WTC11 (cell line): ENCODE measurements at regions of chr4 and their contacts with region 1.

Region 1: GRCh38 chr4:21512353-21512752 is 436.2 kb downstream of the KCNIP4 start:
- DNase-seq: no peak
- ATAC-seq: peak; percentile 79
- H3K4me3 Mint-ChIP-seq: no peak overlapping the region
- H3K27ac Mint-ChIP-seq: no peak overlapping the region
- H3K4me1 Mint-ChIP-seq: no peaks in the 10 kb centered on the region
- H3K27me3 Mint-ChIP-seq: no peaks in the 10 kb centered on the region
- CTCF ChIP-seq: peak; percentile 37

Region 2: DNA sequence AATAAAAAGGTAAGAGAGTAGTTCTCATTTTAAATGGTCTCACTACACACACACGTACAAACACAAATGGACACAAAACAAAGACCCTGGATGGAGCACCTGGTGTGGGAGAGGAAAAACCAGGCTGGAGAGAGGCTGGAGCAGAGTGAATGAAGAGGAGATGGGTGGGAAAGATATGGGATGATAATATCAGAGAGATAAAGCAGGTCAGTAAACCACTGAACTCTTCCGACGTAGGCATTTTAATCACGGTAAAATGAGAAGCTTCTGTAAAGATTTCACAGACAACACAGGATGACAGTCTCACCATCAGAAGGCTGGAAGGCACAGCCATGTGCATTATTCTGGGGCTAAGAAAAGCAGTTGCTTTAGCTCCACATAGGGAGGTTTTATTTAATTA is 96.6 kb before region 1 on chr4:
- CTCF ChIA-PET with region 1: no interaction called
- POLR2A ChIA-PET with region 1: no interaction called
- DNase-seq: no peak
- ATAC-seq: no peak
- H3K4me3 Mint-ChIP-seq: no peak overlapping the region
- H3K27ac Mint-ChIP-seq: no peak overlapping the region
- H3K4me1 Mint-ChIP-seq: no peaks in the 10 kb centered on the region
- H3K27me3 Mint-ChIP-seq: no peaks in the 10 kb centered on the region; the same call in 1 of the 2 replicates
- CTCF ChIP-seq: no peak

Region 3: GRCh38 chr4:21457086-21457840 is 55.1 kb before region 1 on chr4:
- CTCF ChIA-PET with region 1: no interaction called
- POLR2A ChIA-PET with region 1: no interaction called
- DNase-seq: no peak
- ATAC-seq: no peak
- H3K4me3 Mint-ChIP-seq: no peak overlapping the region
- H3K27ac Mint-ChIP-seq: no peak overlapping the region
- H3K4me1 Mint-ChIP-seq: no peaks in the 10 kb centered on the region
- H3K27me3 Mint-ChIP-seq: no peaks in the 10 kb centered on the region
- CTCF ChIP-seq: no peak

Region 4: GRCh38 chr4:21765810-21766407 is 253.6 kb after region 1 on chr4:
- CTCF ChIA-PET with region 1: interaction called, 18 read pairs
- POLR2A ChIA-PET with region 1: no interaction called
- DNase-seq: peak; percentile 67
- ATAC-seq: peak; percentile 89
- H3K4me3 Mint-ChIP-seq: no peak overlapping the region
- H3K27ac Mint-ChIP-seq: peak overlapping the region; percentile 42; the same call in 1 of the 2 replicates
- H3K4me1 Mint-ChIP-seq: peaks cover 19% of the 10 kb centered on the region
- H3K27me3 Mint-ChIP-seq: no peaks in the 10 kb centered on the region; the same call in 1 of the 2 replicates
- CTCF ChIP-seq: peak; percentile 77